PC-9 (cell line): ENCODE measurements at regions of chr1 and their contacts with region 1.

Region 1: GRCh38 chr1:244652699-244653466 is at the start of gene DESI2:
- DNase-seq: peak; percentile 96 to 97
- H3K4me3 ChIP-seq: peak within 1 kb of the TSS; percentile 76
- H3K27ac ChIP-seq: peak within 1 kb of the TSS; percentile 48
- H3K4me1 ChIP-seq: peaks cover 28% of the 10 kb centered on the region
- H3K27me3 ChIP-seq: no peaks in the 10 kb centered on the region
- CTCF ChIP-seq: peak; percentile 68; the same call in 1 of the 2 replicates
- total RNA-seq, gene DESI2: 34.1 and 45.8 TPM in 2 replicates

Region 2: DNA sequence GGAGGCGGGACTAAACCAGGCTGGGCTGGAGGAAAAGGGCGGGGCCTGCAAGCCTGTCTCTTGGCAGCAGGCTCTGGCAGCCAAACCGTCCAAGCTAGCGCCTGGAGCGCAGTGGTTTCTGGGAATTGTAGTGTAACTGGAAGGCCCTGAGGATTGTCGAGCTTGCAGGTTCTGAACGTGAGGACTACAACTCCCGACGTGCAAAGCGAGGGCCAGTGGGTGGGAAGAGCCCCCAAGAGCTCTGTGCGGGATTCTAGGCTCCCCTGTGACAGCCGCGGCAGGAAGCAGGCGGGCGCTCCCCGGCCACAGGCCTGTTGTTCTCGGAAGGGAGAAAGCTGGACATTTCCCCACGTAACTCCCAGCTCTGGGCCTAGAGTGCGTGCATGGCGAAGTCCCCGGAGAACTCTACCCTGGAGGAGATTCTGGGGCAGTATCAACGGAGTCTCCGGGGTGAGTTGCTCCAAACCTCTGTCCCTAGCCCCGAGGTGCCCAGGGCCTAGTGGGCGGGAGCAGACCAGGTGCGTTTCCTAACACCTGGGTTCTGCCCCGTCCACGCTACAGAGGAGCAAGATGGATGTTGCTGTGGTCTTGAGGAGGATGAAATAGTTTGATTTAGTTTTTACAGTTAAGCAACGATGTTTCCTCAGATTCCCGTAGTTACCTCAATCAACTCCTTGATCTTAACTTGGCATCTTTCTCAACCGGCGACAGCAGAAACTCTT is 1396.9 kb before region 1 on chr1 and contains the start of gene SDCCAG8:
- CTCF ChIA-PET with region 1: no interaction called
- POLR2A ChIA-PET with region 1: no interaction called
- intact Hi-C with region 1: loop called (anchors 10 kb)
- DNase-seq: peak; percentile 96 to 98
- H3K4me3 ChIP-seq: peak within 1 kb of the TSS; percentile 76
- H3K27ac ChIP-seq: peak within 1 kb of the TSS; percentile 45
- H3K4me1 ChIP-seq: peaks cover 37% of the 10 kb centered on the region
- H3K27me3 ChIP-seq: no peaks in the 10 kb centered on the region
- CTCF ChIP-seq: no peak
- total RNA-seq, gene SDCCAG8: 20.7 and 22.7 TPM in 2 replicates

Region 3: GRCh38 chr1:244435562-244436205 is 217.2 kb before region 1 on chr1:
- CTCF ChIA-PET with region 1: no interaction called
- POLR2A ChIA-PET with region 1: no interaction called
- intact Hi-C with region 1: no loop called
- DNase-seq: no peak
- H3K4me3 ChIP-seq: no peak overlapping the region
- H3K27ac ChIP-seq: peak overlapping the region; percentile 31; the same call in 1 of the 2 replicates
- H3K4me1 ChIP-seq: peaks cover 30% of the 10 kb centered on the region
- H3K27me3 ChIP-seq: no peaks in the 10 kb centered on the region
- CTCF ChIP-seq: no peak

Region 4: GRCh38 chr1:244705261-244706234 is 52.7 kb after region 1 on chr1:
- CTCF ChIA-PET with region 1: no interaction called
- POLR2A ChIA-PET with region 1: interaction called, 14 read pairs
- intact Hi-C with region 1: no loop called
- DNase-seq: no peak
- H3K4me3 ChIP-seq: no peak overlapping the region
- H3K27ac ChIP-seq: no peak overlapping the region
- H3K4me1 ChIP-seq: no peaks in the 10 kb centered on the region
- H3K27me3 ChIP-seq: no peaks in the 10 kb centered on the region
- CTCF ChIP-seq: no peak

Region 5: GRCh38 chr1:244970661-244971551 is 318.0 kb after region 1 on chr1:
- CTCF ChIA-PET with region 1: no interaction called
- POLR2A ChIA-PET with region 1: no interaction called
- intact Hi-C with region 1: loop called (anchors 1 kb)
- DNase-seq: peak; percentile 80 to 93
- H3K4me3 ChIP-seq: peak overlapping the region; percentile 65
- H3K27ac ChIP-seq: peak overlapping the region; percentile 97
- H3K4me1 ChIP-seq: peaks cover 25% of the 10 kb centered on the region
- H3K27me3 ChIP-seq: no peaks in the 10 kb centered on the region
- CTCF ChIP-seq: peak; percentile 65; the same call in 1 of the 2 replicates